ENCODE measurements at regions of chr2 and their contacts with region 1.

Region 1: DNA sequence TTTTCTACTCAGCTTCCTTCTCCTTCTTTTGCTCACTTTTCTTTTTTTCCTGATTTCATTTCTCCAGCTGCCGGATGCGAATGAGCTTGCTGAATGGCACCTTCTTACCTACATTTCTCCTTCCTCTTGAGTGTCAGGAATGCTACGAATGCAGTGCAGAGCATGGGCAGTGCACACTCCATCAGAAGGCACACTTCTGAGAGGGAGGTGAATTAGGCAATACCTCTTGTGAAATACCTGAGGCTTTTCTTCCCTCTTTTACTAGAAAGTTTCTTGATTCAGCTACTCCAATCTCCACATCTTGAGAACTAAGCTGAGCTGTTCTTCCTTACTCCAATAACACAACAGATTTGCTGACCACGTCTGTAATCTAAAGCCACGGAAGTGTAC is 51.1 kb downstream of the PLEKHM3 start:
- DNase-seq: no peak
- H3K4me3 Mint-ChIP-seq: no peak overlapping the region
- H3K27ac Mint-ChIP-seq: no peak overlapping the region
- H3K4me1 Mint-ChIP-seq: peaks cover 16% of the 10 kb centered on the region
- H3K27me3 Mint-ChIP-seq: no peaks in the 10 kb centered on the region

Region 2: DNA sequence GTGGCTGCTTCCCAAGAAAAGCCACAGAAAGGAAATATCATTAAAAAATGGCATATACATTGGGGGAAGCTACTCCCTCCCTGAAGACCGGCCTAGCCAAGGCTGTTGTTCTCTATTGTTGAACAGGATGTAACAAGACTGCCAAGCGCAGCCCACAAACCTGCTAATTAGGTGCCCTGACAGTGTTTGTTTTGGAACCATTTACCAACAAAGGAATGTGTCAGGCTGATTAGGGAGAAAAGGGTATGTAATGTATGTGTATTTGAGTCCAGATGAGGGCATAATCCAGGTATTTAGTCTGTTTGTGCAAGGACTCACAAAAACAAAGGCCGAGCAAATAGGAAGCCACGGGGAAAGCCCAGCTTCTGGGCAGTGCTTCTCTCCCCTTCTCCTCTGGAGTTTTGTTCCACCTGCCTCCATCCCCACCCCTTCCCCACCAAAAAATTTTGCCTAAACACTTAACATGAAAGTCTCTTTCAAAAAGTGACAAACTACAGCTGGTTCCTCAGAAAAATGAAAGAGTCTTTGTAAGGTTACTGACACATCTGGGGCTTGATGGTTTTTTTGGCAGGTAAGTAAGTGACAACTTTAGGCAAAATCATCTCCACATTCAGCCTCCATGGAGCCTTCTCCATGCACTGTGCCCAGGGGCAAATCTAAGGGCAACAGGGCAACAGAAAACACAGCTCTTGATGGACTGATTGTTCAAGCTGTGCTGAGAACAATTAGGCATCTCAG is 126.2 kb before region 1 on chr2:
- CTCF ChIA-PET with region 1: no interaction called
- DNase-seq: no peak
- H3K4me3 Mint-ChIP-seq: no peak overlapping the region
- H3K27ac Mint-ChIP-seq: no peak overlapping the region
- H3K4me1 Mint-ChIP-seq: peaks cover 5% of the 10 kb centered on the region
- H3K27me3 Mint-ChIP-seq: no peaks in the 10 kb centered on the region

Region 3: DNA sequence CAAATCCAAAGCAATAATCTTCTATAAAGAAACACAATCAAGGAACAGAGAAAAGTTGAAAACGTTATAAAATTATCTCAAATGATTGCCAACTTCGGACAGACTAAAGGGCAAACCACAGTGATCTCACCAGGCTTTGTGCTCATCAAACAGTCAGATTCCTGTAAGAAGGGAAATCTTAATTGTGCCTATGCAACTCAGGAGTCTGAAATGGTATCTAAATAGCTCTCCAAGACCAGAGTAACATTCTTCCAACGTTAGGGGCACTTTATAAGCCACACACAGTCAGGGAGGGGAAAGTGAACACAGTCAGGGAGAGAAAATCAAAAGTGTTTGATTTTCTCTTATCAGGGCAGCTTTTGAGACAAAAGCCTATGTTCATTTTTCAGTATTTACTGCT is 21.7 kb after region 1 on chr2:
- CTCF ChIA-PET with region 1: interaction called, 10 read pairs
- DNase-seq: no peak
- H3K4me3 Mint-ChIP-seq: no peak overlapping the region
- H3K27ac Mint-ChIP-seq: no peak overlapping the region
- H3K4me1 Mint-ChIP-seq: peaks cover 2% of the 10 kb centered on the region
- H3K27me3 Mint-ChIP-seq: no peaks in the 10 kb centered on the region

Measured in activated naive CD4-positive, alpha-beta T cell treated with anti-CD3 and anti-CD28 coated beads, Interleukin-2, amount 10 ng/mL, durations not matched to agents 7 days and 5 days (primary cell).